ENCODE measurements at regions of chr4 and their contacts with region 1.

Region 1: GRCh38 chr4:173013232-173013930 is 155.2 kb upstream of the GALNT7 start:
- DNase-seq: peak; percentile 65
- ATAC-seq: peak; percentile 42
- H3K4me3 Mint-ChIP-seq: no peak overlapping the region
- H3K27ac Mint-ChIP-seq: no peak overlapping the region
- H3K4me1 Mint-ChIP-seq: peaks cover 3% of the 10 kb centered on the region
- H3K27me3 Mint-ChIP-seq: no peaks in the 10 kb centered on the region

Region 2: DNA sequence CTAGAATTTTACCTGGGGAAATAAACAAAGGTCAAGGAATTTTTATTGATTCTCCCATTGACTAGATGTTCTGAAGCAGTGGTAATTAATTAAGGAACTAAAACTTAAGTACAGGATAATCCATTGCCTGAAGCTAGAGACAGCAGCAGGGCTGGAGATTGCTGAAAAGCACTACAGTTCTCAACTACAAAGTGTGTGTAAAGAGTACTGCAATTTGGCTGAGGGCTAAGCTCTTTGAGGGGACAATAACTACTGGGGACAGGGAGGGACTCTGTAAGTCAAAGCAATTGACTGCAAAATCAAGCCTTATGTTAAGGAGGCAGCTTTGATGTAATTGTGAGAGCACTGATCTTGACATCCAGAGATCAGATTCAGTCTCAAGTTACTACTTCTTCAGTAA is 939.8 kb before region 1 on chr4:
- CTCF ChIA-PET with region 1: no interaction called
- POLR2A ChIA-PET with region 1: no interaction called
- intact Hi-C with region 1: no loop called
- DNase-seq: no peak
- ATAC-seq: no peak
- H3K4me3 Mint-ChIP-seq: no peak overlapping the region
- H3K27ac Mint-ChIP-seq: no peak overlapping the region
- H3K4me1 Mint-ChIP-seq: no peaks in the 10 kb centered on the region
- H3K27me3 Mint-ChIP-seq: no peaks in the 10 kb centered on the region

Region 3: DNA sequence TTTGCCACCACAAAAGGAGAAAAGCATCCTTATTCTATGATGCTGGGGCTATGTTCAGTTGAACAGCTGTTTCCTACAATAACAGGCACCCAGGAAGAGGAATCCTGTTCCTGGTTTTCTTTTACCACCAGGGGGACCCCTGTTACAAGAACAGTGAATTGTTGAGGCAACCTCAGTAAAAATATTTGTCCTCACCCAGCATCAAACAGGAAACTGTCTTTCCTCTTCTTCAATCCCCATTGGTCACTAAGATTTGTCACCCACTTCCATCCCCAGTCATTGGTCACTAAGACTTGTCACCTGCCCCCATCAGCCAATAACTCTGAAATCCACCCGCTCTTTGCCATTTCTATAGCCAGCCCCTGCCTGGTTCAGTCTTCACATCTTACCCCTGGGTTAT is 11.8 kb after region 1 on chr4:
- CTCF ChIA-PET with region 1: interaction called, 21 read pairs
- POLR2A ChIA-PET with region 1: interaction called, 4 read pairs
- intact Hi-C with region 1: no loop called
- DNase-seq: peak; percentile 26
- ATAC-seq: peak; percentile 65
- H3K4me3 Mint-ChIP-seq: no peak overlapping the region
- H3K27ac Mint-ChIP-seq: no peak overlapping the region
- H3K4me1 Mint-ChIP-seq: peaks cover 4% of the 10 kb centered on the region
- H3K27me3 Mint-ChIP-seq: no peaks in the 10 kb centered on the region

Region 4: GRCh38 chr4:173252024-173252935 is 238.9 kb after region 1 on chr4:
- CTCF ChIA-PET with region 1: interaction called, 80 read pairs
- POLR2A ChIA-PET with region 1: no interaction called
- intact Hi-C with region 1: loop called (anchors 1 kb)
- DNase-seq: peak; percentile 58
- ATAC-seq: peak; percentile 92
- H3K4me3 Mint-ChIP-seq: no peak overlapping the region
- H3K27ac Mint-ChIP-seq: no peak overlapping the region
- H3K4me1 Mint-ChIP-seq: peaks cover 14% of the 10 kb centered on the region
- H3K27me3 Mint-ChIP-seq: no peaks in the 10 kb centered on the region

Region 5: DNA sequence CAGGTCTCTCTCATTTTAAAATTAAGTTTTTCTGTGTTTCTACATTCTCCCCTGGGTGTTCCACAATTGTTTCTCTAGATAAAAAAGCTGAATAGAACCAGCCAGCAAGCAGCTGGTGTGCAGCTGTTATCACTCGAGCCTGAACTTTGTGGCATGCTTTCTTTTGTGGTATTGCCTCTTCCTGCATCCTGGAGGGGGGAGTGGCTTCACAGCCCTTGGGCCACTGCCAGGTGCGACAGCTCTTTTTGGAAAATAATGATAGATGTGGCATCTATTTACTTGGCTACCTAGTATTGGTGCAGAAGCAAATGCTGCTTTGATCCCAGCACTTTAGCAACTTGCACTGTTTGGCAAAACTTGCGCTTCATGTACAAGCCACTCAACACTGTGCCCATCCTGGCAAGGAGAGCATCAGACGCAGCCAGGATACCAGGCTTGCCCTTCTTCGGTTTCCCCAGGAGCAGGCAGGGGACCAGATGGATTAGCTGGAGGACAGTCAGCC is 251.4 kb after region 1 on chr4:
- CTCF ChIA-PET with region 1: interaction called, 19 read pairs
- POLR2A ChIA-PET with region 1: no interaction called
- intact Hi-C with region 1: no loop called
- DNase-seq: peak; percentile 34
- ATAC-seq: peak; percentile 57
- H3K4me3 Mint-ChIP-seq: peak overlapping the region; percentile 51
- H3K27ac Mint-ChIP-seq: no peak overlapping the region
- H3K4me1 Mint-ChIP-seq: peaks cover 24% of the 10 kb centered on the region
- H3K27me3 Mint-ChIP-seq: no peaks in the 10 kb centered on the region

Region 6: GRCh38 chr4:173318648-173319211 is 305.3 kb after region 1 on chr4:
- CTCF ChIA-PET with region 1: interaction called, 9 read pairs
- POLR2A ChIA-PET with region 1: no interaction called
- intact Hi-C with region 1: loop called in 1 of 2 experiments (anchors 5 kb)
- DNase-seq: no peak
- ATAC-seq: peak; percentile 88
- H3K4me3 Mint-ChIP-seq: no peak overlapping the region
- H3K27ac Mint-ChIP-seq: no peak overlapping the region
- H3K4me1 Mint-ChIP-seq: peaks cover 11% of the 10 kb centered on the region
- H3K27me3 Mint-ChIP-seq: no peaks in the 10 kb centered on the region

Region 7: DNA sequence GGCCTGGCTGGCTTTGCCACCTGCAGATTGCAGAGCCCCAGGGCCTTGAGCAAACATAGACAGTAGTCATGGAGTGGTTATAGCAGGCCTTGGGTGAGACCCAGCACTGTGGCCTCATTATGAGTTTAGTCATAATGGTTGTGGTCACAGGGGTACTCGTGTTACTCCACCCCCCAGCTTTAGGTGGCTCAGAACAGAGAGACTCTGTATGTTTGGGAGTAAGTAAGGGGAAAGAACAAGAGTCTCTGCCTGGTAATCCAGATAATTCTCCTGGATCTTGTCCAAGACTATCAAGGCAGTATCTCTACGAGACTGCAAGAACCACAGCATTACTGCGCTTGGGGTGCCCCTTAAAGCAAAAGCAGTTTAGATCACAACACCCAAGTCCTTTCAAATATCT is 447.8 kb after region 1 on chr4:
- CTCF ChIA-PET with region 1: no interaction called
- POLR2A ChIA-PET with region 1: no interaction called
- intact Hi-C with region 1: no loop called
- DNase-seq: no peak
- ATAC-seq: no peak
- H3K4me3 Mint-ChIP-seq: no peak overlapping the region
- H3K27ac Mint-ChIP-seq: no peak overlapping the region
- H3K4me1 Mint-ChIP-seq: no peaks in the 10 kb centered on the region
- H3K27me3 Mint-ChIP-seq: peaks cover 3% of the 10 kb centered on the region

Region 8: GRCh38 chr4:173494013-173494970 is 480.9 kb after region 1 on chr4:
- CTCF ChIA-PET with region 1: no interaction called
- POLR2A ChIA-PET with region 1: no interaction called
- intact Hi-C with region 1: loop called (anchors 1 to 10 kb)
- DNase-seq: peak; percentile 79
- ATAC-seq: peak; percentile 97
- H3K4me3 Mint-ChIP-seq: peak overlapping the region; percentile 69
- H3K27ac Mint-ChIP-seq: peak overlapping the region; percentile 17
- H3K4me1 Mint-ChIP-seq: peaks cover 10% of the 10 kb centered on the region
- H3K27me3 Mint-ChIP-seq: peaks cover 33% of the 10 kb centered on the region

Measured in activated CD4-positive, alpha-beta T cell treated with anti-CD3 and anti-CD28 coated beads for 36 hours (primary cell).